Stomach (tissue), 19 donors: ENCODE measurements at regions of chr18 and their contacts with region 1.

Region 1: GRCh38 chr18:45967007-45967706 is at the start of gene EPG5:
- DNase-seq: peak; percentile 97 to 98
- H3K4me3 ChIP-seq: peak within 1 kb of the TSS; percentile 64 to 97 (median 82)
- H3K27ac ChIP-seq: peak within 1 kb of the TSS; percentile 78 to 91 (median 81)
- H3K4me1 ChIP-seq: peaks cover 4 to 40% (median 23%) of the 10 kb centered on the region in 4 donors
- H3K27me3 ChIP-seq: no peaks in the 10 kb centered on the region
- CTCF ChIP-seq: no peak
- EP300 ChIP-seq: no peak
- POLR2A ChIP-seq: no peak
- total RNA-seq, gene EPG5: 16.2 to 52.9 (median 22.6) TPM

Region 2: GRCh38 chr18:46073474-46074331 is 106.5 kb after region 1 on chr18:
- intact Hi-C with region 1: loop called (anchors 10 kb)
- DNase-seq: peak; percentile 35 to 84
- H3K4me3 ChIP-seq: no peak overlapping the region
- H3K27ac ChIP-seq: no peak overlapping the region
- H3K4me1 ChIP-seq: peaks cover 17 to 50% (median 42%) of the 10 kb centered on the region in 4 donors
- H3K27me3 ChIP-seq: no peaks in the 10 kb centered on the region
- CTCF ChIP-seq: peak in 5 of 7 experiments; percentile 41 to 71 (median 48)
- EP300 ChIP-seq: no peak
- POLR2A ChIP-seq: no peak